ENCODE measurements at regions of chr1 and their contacts with region 1.

Region 1: GRCh38 chr1:16960560-16961296 is 19.7 kb downstream of the MFAP2 start:
- DNase-seq: peak; percentile 92
- ATAC-seq: peak; percentile 90

Region 2: GRCh38 chr1:16904560-16905111 is 56.1 kb before region 1 on chr1:
- intact Hi-C with region 1: no loop called
- DNase-seq: peak; percentile 97
- ATAC-seq: peak; percentile 100

Region 3: GRCh38 chr1:17045634-17046333 is 85.1 kb after region 1 on chr1:
- intact Hi-C with region 1: loop called (anchors 5 kb)
- DNase-seq: no peak
- ATAC-seq: peak; percentile 67